Activated B cell treated with CpG ODN at 0.5 μM for 24 hours (primary cell): ENCODE measurements at regions of chr3 and their contacts with region 1.

Region 1: DNA sequence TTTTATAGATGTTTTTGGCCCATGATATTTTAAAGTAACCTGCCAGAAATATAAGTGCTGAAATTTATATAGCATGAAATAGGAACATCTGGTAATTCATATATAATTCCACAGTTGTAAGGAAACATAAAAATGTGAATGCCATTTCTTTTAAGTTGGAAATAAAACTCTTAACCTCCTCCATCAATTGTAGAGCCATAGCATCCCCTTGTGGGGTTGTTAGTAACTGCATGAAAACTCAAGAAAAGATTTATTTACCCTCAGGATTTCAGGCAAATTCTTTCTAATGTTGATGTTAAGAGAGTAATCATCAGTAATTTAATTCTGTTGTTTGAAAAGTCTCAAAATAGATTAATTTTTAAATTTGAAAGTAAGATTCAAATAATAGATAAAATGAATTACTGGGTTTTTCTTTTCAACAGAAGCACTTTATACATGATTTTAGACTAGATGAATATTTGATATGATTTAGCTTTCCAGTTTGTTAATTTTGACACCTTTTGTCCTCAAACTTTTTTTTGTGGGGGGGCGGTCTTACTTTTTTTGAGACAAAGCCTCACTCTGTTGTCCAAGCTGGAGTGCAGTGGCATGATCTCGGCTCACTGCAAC is 74.7 kb downstream of the RASA2 start:
- DNase-seq: no peak
- ATAC-seq: peak; percentile 65
- H3K4me3 Mint-ChIP-seq: no peak overlapping the region
- H3K27ac Mint-ChIP-seq: no peak overlapping the region
- H3K4me1 Mint-ChIP-seq: peaks cover 6% of the 10 kb centered on the region
- H3K27me3 Mint-ChIP-seq: no peaks in the 10 kb centered on the region
- CTCF ChIP-seq: no peak

Region 2: DNA sequence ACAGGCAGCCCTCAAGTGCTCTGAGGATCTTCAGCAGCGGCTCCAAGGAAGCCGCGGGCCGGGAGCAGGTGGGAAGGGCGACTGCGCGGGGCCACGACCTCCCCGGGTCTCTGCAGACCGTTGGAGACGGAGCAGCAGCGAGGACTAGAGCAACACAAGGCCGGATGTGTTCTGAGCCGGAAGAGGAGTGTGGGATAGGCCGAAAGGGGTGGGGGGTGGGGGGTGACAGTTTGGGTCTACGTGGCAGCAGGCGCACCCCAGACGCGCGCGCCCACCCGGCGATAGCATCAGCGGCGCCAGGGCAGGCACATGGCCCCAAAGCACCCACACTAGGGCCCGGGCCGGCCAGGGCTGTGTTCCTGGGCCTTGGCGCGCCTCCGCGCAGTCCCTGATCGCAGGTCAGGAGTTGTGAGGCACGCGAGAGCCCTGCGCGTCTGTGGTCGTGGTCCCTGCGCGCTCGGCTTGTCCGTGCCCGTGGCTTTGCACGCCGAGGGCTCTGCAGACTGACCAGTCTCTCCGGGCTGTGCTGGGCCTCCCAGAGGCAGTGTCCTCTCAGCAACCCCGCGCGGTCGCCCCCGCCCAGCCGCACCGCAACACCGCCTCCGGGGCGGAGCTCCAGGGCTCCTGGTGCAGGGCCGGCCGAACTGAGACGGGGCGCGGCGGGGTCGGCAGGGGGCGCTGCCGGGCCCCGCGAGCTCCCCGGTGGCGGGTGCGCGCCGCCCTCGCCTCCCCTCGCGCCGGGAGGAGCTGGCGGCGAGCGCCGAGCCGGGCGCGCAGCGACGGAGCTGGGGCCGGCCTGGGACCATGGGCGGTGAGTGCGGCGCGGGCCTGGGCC is 330.2 kb before region 1 on chr3 and contains the start of gene PXYLP1:
- CTCF ChIA-PET with region 1: interaction called, 5 read pairs
- POLR2A ChIA-PET with region 1: no interaction called
- intact Hi-C with region 1: loop called (anchors 5 kb)
- DNase-seq: peak; percentile 91
- ATAC-seq: peak; percentile 96
- H3K4me3 Mint-ChIP-seq: peak within 1 kb of the TSS; percentile 93
- H3K27ac Mint-ChIP-seq: peak within 1 kb of the TSS; percentile 94
- H3K4me1 Mint-ChIP-seq: peaks cover 16% of the 10 kb centered on the region
- H3K27me3 Mint-ChIP-seq: no peaks in the 10 kb centered on the region
- CTCF ChIP-seq: no peak
- total RNA-seq, gene PXYLP1: 2.3 and 2.7 TPM in 2 replicates

Region 3: GRCh38 chr3:141303481-141304223 is 257.9 kb before region 1 on chr3:
- CTCF ChIA-PET with region 1: interaction called, 19 read pairs
- POLR2A ChIA-PET with region 1: no interaction called
- intact Hi-C with region 1: loop called (anchors 1 kb)
- DNase-seq: no peak
- ATAC-seq: peak; percentile 88
- H3K4me3 Mint-ChIP-seq: no peak overlapping the region
- H3K27ac Mint-ChIP-seq: no peak overlapping the region
- H3K4me1 Mint-ChIP-seq: peaks cover 2% of the 10 kb centered on the region
- H3K27me3 Mint-ChIP-seq: no peaks in the 10 kb centered on the region
- CTCF ChIP-seq: no peak

Region 4: DNA sequence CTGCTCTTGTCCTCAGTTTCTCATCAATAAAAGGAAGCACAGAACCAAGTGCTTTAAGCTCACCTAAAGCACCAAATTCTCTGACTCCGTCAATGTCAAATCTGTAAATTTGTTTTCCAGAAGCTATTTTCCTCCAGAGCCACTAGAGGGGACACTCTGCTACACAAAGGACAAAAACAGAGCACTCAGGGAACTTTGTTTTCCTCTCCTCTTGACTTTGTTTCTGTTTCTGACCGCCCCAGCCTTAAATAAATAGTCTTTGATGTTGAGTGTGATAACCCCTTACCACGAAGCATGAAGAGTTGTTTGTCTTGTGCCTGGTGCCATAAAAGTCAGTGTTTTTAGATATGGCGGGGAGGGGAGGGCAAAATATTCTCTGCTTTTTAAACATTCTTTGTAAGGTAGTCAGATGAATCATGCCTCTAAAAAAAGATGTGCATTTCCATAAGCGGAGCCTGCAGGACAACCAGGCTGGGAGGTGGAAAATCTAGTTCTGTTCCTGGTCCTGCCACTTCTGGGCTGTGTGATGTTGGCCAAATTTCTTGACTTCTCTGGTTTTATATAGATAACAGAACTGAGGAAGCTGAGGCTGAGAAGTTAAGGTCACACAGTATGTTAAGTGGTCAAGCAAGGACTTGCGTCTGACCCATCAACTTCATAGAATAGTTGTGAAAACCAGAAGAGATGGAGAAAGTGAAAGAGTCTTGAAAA is 200.5 kb before region 1 on chr3:
- CTCF ChIA-PET with region 1: interaction called, 3 read pairs
- POLR2A ChIA-PET with region 1: no interaction called
- intact Hi-C with region 1: loop called (anchors 2 kb)
- DNase-seq: no peak
- ATAC-seq: peak; percentile 49
- H3K4me3 Mint-ChIP-seq: peak overlapping the region; percentile 13
- H3K27ac Mint-ChIP-seq: no peak overlapping the region
- H3K4me1 Mint-ChIP-seq: peaks cover 7% of the 10 kb centered on the region
- H3K27me3 Mint-ChIP-seq: peaks cover 3% of the 10 kb centered on the region
- CTCF ChIP-seq: no peak

Region 5: DNA sequence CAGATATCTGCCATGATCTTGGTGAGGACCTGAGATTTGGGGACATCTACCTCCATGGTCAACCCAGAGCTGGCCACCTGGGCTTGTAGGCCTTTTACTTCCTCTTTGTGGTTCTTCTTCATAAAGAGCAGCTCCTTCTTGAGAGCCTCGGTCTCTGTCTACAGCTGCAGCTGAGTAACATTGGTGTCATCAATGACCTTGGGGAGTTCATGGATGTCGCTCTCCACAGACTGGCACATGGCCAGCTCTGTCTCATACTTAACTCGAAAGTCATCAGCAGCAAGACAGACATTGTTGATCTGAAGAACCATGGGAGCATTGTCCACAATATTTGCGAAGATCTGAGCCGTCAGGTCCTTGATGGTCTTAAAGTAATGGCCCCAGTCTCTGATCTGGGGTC is 90.4 kb before region 1 on chr3:
- CTCF ChIA-PET with region 1: interaction called, 64 read pairs
- POLR2A ChIA-PET with region 1: interaction called, 3 read pairs
- intact Hi-C with region 1: loop called (anchors 1 kb)
- DNase-seq: no peak
- ATAC-seq: no peak
- H3K4me3 Mint-ChIP-seq: no peak overlapping the region
- H3K27ac Mint-ChIP-seq: peak overlapping the region; percentile 50
- H3K4me1 Mint-ChIP-seq: peaks cover 11% of the 10 kb centered on the region
- H3K27me3 Mint-ChIP-seq: no peaks in the 10 kb centered on the region
- CTCF ChIP-seq: no peak

Region 6: DNA sequence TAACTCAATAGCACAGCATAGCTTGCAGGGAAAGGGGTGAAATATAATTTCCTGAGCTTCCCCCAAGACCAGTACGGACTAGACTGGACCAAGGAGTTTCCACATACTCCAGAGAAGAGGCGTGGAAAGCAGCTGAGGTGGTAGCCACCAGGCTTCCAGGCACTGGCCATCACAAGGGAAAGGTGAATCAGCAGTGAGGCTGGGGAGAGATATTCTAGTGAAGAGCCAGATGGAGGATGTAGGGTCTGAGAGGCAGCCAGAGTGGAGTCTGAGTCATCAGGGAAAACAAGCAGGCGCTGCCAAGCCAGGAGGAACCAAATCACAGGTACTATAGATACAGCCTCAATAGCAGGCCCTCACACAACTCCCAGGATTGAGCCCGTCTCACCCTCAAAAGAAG is 84.3 kb before region 1 on chr3:
- CTCF ChIA-PET with region 1: interaction called, 64 read pairs
- POLR2A ChIA-PET with region 1: interaction called, 3 read pairs
- intact Hi-C with region 1: loop called (anchors 1 kb)
- DNase-seq: no peak
- ATAC-seq: no peak
- H3K4me3 Mint-ChIP-seq: no peak overlapping the region
- H3K27ac Mint-ChIP-seq: no peak overlapping the region
- H3K4me1 Mint-ChIP-seq: peaks cover 14% of the 10 kb centered on the region
- H3K27me3 Mint-ChIP-seq: no peaks in the 10 kb centered on the region
- CTCF ChIP-seq: no peak